ENCODE measurements at regions of chr14 and their contacts with region 1.

Region 1: GRCh38 chr14:69657950-69658355 is 46.6 kb downstream of the SUSD6 start:
- DNase-seq: peak; percentile 71
- H3K4me3 Mint-ChIP-seq: peak overlapping the region; percentile 69
- H3K27ac Mint-ChIP-seq: peak overlapping the region; percentile 98
- H3K4me1 Mint-ChIP-seq: peaks cover 51% of the 10 kb centered on the region
- H3K27me3 Mint-ChIP-seq: no peaks in the 10 kb centered on the region
- CTCF ChIP-seq: no peak

Region 2: GRCh38 chr14:69643443-69644164 is 14.3 kb before region 1 on chr14:
- CTCF ChIA-PET with region 1: interaction called, 3 read pairs
- POLR2A ChIA-PET with region 1: interaction called, 38 read pairs
- intact Hi-C with region 1: no loop called
- DNase-seq: peak; percentile 96
- H3K4me3 Mint-ChIP-seq: no peak overlapping the region
- H3K27ac Mint-ChIP-seq: peak overlapping the region; percentile 76
- H3K4me1 Mint-ChIP-seq: peaks cover 50% of the 10 kb centered on the region
- H3K27me3 Mint-ChIP-seq: no peaks in the 10 kb centered on the region
- CTCF ChIP-seq: no peak

Region 3: DNA sequence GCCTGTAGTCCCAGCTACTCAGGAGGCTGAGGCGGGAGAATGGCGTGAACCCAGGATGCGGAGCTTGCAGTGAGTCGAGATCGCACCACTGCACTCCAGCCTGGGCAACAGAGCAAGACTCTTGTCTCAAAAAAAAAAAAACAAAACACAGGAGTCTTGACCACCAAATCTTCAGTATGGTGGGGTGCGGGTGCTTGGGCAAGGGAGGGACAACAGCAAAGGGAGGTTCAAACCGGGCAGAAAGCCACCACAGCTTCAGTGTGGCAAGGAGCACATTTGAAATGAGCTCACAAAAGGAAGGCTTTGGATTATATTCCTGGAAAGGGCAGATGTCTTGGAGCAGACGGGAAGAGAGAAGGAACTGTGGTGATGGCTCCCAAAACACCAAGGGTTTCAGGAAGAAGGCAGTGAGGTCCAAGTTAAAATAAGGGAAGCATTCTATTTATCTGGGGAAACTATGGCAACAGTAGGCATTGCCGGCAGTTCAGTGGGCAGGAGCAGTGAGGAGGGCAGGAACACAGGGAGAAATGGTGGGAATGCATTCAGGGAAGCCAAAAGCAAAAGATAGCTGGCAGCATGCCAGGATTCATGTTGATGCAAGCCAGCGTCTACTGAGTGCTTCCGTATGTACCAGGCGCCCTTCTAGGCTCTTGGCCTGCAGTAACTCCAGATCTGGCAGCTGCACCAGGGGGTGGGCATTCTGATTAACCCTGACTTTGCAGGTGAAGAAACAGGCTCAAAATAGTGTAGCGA is 57.9 kb after region 1 on chr14:
- CTCF ChIA-PET with region 1: interaction called, 3 read pairs
- POLR2A ChIA-PET with region 1: interaction called, 12 read pairs
- intact Hi-C with region 1: loop called (anchors 10 kb)
- DNase-seq: peak; percentile 98
- H3K4me3 Mint-ChIP-seq: peak overlapping the region; percentile 21
- H3K27ac Mint-ChIP-seq: peak overlapping the region; percentile 61
- H3K4me1 Mint-ChIP-seq: peaks cover 48% of the 10 kb centered on the region
- H3K27me3 Mint-ChIP-seq: no peaks in the 10 kb centered on the region
- CTCF ChIP-seq: no peak